Activated CD4-positive, alpha-beta T cell treated with anti-CD3 and anti-CD28 coated beads for 36 hours (primary cell): ENCODE measurements at regions of chr12 and their contacts with region 1.

Region 1: DNA sequence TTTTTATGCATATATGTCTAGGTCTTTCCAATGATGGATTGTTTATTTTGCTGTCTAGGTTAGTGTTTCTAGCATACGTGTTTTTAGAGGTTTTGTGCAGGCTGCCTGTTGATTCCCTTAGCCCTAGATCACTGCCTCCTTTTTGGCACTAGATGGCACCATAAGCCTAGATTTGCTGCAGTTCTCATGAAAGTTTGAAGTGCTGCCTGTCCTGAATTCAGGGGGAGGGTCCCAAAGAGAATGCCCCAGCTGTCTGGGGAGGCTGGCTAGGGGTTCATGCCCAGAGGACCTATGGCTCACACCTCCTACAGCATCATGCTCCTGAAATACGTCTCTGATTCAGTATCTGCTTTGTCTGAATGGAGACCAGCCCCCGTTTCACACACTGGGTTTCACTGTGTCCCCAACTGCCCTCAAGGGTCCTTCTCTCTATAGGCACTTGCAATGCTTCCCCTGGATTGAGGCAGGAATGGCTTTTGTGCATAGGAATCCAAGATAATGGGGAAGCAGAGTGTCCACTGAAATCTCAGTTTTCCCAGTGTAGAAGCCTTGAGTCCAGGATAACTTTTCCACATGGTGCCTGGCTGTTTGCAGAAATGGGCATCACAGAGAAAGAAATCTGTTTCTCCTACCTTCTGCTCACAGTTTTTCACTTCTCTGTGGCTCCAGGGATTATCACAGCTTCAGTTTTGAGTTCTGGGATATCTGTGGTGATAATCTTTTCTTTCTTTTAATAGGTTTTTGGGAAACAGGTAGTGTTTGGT is 14.2 kb upstream of the TXNRD1 start:
- DNase-seq: peak; percentile 53
- ATAC-seq: peak; percentile 77
- H3K4me3 Mint-ChIP-seq: no peak overlapping the region
- H3K27ac Mint-ChIP-seq: no peak overlapping the region
- H3K4me1 Mint-ChIP-seq: peaks cover 2% of the 10 kb centered on the region
- H3K27me3 Mint-ChIP-seq: peaks cover 8% of the 10 kb centered on the region

Region 2: DNA sequence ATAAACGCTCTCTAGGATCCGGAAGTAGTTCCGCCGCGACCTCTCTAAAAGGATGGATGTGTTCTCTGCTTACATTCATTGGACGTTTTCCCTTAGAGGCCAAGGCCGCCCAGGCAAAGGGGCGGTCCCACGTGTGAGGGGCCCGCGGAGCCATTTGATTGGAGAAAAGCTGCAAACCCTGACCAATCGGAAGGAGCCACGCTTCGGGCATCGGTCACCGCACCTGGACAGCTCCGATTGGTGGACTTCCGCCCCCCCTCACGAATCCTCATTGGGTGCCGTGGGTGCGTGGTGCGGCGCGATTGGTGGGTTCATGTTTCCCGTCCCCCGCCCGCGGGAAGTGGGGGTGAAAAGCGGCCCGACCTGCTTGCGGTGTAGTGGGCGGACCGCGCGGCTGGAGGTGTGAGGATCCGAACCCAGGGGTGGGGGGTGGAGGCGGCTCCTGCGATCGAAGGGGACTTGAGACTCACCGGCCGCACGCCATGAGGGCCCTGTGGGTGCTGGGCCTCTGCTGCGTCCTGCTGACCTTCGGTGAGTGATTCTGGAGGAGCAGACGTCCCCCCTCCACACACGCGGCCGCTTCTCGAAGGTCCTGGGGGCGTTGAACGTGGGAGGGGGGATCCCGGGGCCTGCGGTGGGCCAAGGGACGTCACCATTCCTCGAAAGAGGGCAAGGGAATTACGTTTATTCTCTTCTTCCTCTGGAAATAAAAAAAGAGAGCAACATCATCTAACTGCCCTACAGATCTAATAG is 271.2 kb before region 1 on chr12 and contains the start of gene HSP90B1:
- CTCF ChIA-PET with region 1: no interaction called
- POLR2A ChIA-PET with region 1: no interaction called
- intact Hi-C with region 1: no loop called
- DNase-seq: peak; percentile 100
- ATAC-seq: peak; percentile 75
- H3K4me3 Mint-ChIP-seq: peak within 1 kb of the TSS; percentile 77
- H3K27ac Mint-ChIP-seq: peak within 1 kb of the TSS; percentile 100
- H3K4me1 Mint-ChIP-seq: peaks cover 54% of the 10 kb centered on the region
- H3K27me3 Mint-ChIP-seq: no peaks in the 10 kb centered on the region
- total RNA-seq, gene HSP90B1: 384 to 394 TPM

Region 3: DNA sequence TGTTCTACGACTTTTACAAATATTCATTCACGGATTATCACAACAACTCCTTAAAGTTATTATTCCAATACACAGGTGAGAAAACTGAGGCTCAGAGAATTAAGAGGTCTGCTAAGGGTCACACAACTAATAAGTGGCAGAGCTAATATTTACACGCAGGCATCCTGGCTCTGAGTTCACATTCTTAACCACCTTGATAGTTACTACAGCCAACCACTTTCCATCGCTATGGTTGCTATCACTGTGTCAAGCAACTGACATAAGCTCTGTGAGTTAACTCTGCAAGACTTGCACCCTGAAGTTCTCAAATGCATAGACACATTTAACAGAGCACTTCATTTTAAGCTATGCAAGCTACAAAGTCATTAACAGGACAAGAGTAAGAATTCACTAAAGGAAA is 155.1 kb before region 1 on chr12:
- CTCF ChIA-PET with region 1: no interaction called
- POLR2A ChIA-PET with region 1: no interaction called
- intact Hi-C with region 1: no loop called
- DNase-seq: no peak
- ATAC-seq: no peak
- H3K4me3 Mint-ChIP-seq: no peak overlapping the region
- H3K27ac Mint-ChIP-seq: no peak overlapping the region
- H3K4me1 Mint-ChIP-seq: peaks cover 8% of the 10 kb centered on the region
- H3K27me3 Mint-ChIP-seq: peaks cover 18% of the 10 kb centered on the region

Region 4: GRCh38 chr12:104163631-104164030 is 37.8 kb before region 1 on chr12:
- CTCF ChIA-PET with region 1: interaction called, 4 read pairs
- POLR2A ChIA-PET with region 1: no interaction called
- intact Hi-C with region 1: loop called in 1 of 2 experiments (anchors 5 kb)
- DNase-seq: no peak
- ATAC-seq: peak; percentile 23
- H3K4me3 Mint-ChIP-seq: no peak overlapping the region
- H3K27ac Mint-ChIP-seq: no peak overlapping the region
- H3K4me1 Mint-ChIP-seq: peaks cover 2% of the 10 kb centered on the region
- H3K27me3 Mint-ChIP-seq: no peaks in the 10 kb centered on the region

Region 5: GRCh38 chr12:104358347-104359003 is 157.1 kb after region 1 on chr12:
- CTCF ChIA-PET with region 1: interaction called, 14 read pairs
- POLR2A ChIA-PET with region 1: no interaction called
- intact Hi-C with region 1: loop called (anchors 1 kb)
- DNase-seq: peak; percentile 82
- ATAC-seq: peak; percentile 90
- H3K4me3 Mint-ChIP-seq: no peak overlapping the region
- H3K27ac Mint-ChIP-seq: no peak overlapping the region
- H3K4me1 Mint-ChIP-seq: peaks cover 3% of the 10 kb centered on the region
- H3K27me3 Mint-ChIP-seq: no peaks in the 10 kb centered on the region

Region 6: GRCh38 chr12:104535369-104535768 is 333.9 kb after region 1 on chr12:
- CTCF ChIA-PET with region 1: no interaction called
- POLR2A ChIA-PET with region 1: no interaction called
- intact Hi-C with region 1: no loop called
- DNase-seq: no peak
- ATAC-seq: no peak
- H3K4me3 Mint-ChIP-seq: no peak overlapping the region
- H3K27ac Mint-ChIP-seq: no peak overlapping the region
- H3K4me1 Mint-ChIP-seq: peaks cover 42% of the 10 kb centered on the region
- H3K27me3 Mint-ChIP-seq: no peaks in the 10 kb centered on the region

Region 7: GRCh38 chr12:105053116-105053572 is 851.7 kb after region 1 on chr12:
- CTCF ChIA-PET with region 1: no interaction called
- POLR2A ChIA-PET with region 1: no interaction called
- intact Hi-C with region 1: loop called in 1 of 2 experiments (anchors 5 kb)
- DNase-seq: peak; percentile 85
- ATAC-seq: peak; percentile 85
- H3K4me3 Mint-ChIP-seq: no peak overlapping the region
- H3K27ac Mint-ChIP-seq: no peak overlapping the region
- H3K4me1 Mint-ChIP-seq: peaks cover 4% of the 10 kb centered on the region
- H3K27me3 Mint-ChIP-seq: peaks cover 4% of the 10 kb centered on the region